Right ventricle myocardium superior (tissue), 1 donor: ENCODE measurements at regions of chr10 and their contacts with region 1.

Region 1: DNA sequence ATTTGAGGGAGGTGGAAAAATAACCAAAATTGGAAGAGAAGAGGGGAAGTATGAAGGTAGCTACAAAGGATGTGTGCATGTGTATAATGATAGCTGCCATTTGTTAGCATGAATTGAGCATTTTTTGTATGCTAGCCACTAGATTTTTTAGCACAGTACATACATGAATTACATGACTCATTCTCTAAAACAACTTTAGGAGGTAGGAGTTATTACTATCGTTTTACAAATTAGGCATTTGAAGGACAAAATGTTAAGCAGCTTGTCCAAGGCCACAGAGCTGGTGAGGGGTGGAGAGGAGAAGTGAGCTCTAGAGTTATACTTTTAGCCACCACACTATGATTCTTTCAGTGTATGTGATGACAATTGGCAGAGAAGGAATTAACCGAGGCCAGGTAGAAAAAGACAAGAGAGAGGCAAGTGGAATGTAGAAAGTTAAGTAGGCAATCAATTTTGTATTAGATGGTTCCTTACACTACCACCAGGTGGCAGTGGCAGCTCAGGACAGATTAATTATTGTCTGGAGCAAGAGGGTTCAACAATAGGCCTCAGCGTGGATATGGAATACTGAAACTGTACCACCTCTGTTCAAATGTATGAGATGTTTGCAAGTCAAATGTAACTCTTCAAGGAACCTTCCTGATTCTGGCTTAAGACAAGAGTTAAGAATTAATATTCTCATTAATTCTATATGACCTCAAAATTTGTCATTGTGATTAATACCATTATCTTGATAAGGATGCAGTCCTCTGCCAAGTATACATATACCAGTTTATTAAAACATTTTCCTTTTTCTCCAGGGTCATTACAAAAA is 128.0 kb downstream of the MBL2 start:
- DNase-seq: no peak
- ATAC-seq: peak; percentile 86

Region 2: GRCh38 chr10:51804866-51805265 is 839.7 kb before region 1 on chr10:
- intact Hi-C with region 1: no loop called
- DNase-seq: no peak
- ATAC-seq: no peak

Region 3: GRCh38 chr10:52351914-52352330 is 292.7 kb before region 1 on chr10:
- intact Hi-C with region 1: no loop called
- DNase-seq: no peak
- ATAC-seq: no peak

Region 4: DNA sequence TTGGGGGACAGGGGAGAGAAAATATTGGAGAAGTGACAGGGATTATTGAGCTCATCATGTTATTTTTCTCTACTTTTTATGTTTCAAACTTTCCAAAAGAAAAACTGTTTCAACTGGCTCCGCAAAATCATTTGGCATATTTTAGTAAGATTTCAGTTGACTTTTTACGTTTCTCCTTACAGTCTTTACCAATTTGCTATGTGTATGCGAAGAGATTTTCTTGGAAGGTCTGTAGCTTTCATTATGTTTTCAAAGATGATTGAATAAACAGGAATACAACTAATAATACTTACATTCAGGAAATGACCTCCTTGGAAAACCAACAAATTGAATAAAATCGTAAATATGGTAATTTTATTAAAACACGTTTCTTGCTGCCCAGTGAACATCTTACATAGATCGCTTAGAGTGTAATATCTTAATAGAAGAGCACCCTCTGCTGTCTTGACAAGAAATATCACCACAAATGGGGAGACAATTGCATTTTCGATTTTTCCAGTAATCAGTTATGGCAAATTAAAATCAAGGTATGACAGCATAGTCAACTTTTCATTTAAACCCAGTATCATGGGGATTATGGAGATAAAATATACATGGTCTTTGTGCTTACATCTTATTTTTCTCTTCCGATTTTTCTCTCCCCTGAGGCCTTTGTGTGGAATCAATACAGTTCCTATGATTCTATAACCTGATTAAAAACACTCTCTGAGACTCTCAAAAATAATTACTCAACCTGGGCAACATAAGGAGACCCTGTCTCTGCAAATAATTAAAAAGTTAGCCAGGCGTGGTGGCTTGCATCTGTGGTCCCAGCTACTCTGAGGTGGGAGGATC is 84.9 kb after region 1 on chr10:
- intact Hi-C with region 1: loop called (anchors 2 kb)
- DNase-seq: no peak
- ATAC-seq: peak; percentile 64